Mammary epithelial cell (primary cell): ENCODE measurements at regions of chr18 and their contacts with region 1.

Region 1: GRCh38 chr18:50967714-50968661 is at the start of gene ELAC1:
- DNase-seq: peak; percentile 79
- H3K4me3 ChIP-seq: peak within 1 kb of the TSS; percentile 78 to 96 (median 91)
- H3K27ac ChIP-seq: peak within 1 kb of the TSS; percentile 91
- H3K4me1 ChIP-seq: peaks cover 16% of the 10 kb centered on the region
- H3K27me3 ChIP-seq: no peaks in the 10 kb centered on the region
- CTCF ChIP-seq: no peak
- total RNA-seq, gene ELAC1: 5.5 to 11.2 TPM

Region 2: DNA sequence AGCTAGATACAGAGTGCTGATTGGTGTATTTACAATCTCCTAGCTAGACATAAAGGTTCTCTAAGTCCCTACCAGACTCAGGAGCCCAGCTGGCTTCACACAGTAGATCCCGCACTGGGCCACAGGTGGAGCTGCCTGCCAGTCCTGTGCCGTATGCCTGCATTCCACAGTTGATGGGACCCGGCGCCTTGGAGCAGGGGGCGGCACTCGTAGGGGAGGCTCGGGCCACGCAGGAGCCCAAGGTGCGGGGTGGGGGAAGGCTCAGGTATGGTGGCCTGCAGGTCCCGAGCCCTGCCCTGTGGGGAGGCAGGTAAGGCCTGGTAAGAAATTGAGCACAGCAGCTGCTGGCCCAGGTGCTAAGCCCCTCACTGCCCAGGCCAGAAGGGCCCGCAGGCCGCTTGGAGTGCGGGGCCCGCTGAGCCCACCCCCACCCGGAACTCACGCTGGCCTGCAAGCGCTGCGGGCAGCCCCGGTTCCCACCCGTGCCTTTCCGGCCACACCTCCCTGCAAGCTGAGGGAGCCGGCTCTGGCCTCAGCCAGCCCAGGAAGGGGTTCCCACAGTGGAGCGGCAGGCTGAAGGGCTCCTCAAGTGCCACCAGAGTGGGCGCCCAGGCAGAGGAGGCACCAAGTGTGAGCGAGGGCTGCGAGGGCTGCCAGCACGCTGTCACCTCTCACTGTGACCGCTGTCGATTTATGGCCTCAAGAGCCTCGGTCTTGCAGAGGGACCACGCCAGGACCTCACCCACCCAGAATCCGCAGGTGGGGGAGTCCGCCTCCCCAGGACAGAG is 153.0 kb after region 1 on chr18:
- CTCF ChIA-PET with region 1: no interaction called
- dilution Hi-C with region 1: no loop called
- in situ Hi-C with region 1: no loop called
- intact Hi-C with region 1: no loop called
- DNase-seq: no peak
- H3K4me3 ChIP-seq: no peak overlapping the region
- H3K27ac ChIP-seq: no peak overlapping the region
- H3K4me1 ChIP-seq: no peaks in the 10 kb centered on the region
- H3K27me3 ChIP-seq: no peaks in the 10 kb centered on the region
- CTCF ChIP-seq: no peak

Region 3: DNA sequence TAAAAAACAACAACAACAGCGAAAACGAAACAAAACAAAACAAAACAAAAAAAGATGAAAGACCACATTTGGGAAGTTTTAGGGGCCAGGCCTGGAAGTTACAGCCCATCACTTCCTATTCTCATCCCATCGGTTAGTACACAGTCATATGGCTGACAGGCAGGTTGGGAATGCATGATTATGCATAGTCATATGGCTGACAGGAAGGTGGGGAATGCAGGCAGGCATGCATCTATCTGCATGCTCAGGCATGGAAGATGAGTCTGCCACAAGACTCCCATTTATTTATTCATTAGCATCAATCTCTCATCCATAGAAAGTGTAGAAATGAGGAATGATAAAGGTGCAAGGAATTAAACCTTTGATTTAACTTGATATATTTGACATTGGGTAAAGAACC is 554.8 kb after region 1 on chr18:
- CTCF ChIA-PET with region 1: no interaction called
- dilution Hi-C with region 1: no loop called
- in situ Hi-C with region 1: no loop called
- intact Hi-C with region 1: loop called (anchors 5 kb)
- DNase-seq: peak; percentile 87
- H3K4me3 ChIP-seq: no peak overlapping the region
- H3K27ac ChIP-seq: peak overlapping the region; percentile 76
- H3K4me1 ChIP-seq: peaks cover 80% of the 10 kb centered on the region
- H3K27me3 ChIP-seq: no peaks in the 10 kb centered on the region
- CTCF ChIP-seq: no peak